Activated B cell treated with CpG ODN at 0.5 μM for 24 hours (primary cell): ENCODE measurements at regions of chr7 and their contacts with region 1.

Region 1: DNA sequence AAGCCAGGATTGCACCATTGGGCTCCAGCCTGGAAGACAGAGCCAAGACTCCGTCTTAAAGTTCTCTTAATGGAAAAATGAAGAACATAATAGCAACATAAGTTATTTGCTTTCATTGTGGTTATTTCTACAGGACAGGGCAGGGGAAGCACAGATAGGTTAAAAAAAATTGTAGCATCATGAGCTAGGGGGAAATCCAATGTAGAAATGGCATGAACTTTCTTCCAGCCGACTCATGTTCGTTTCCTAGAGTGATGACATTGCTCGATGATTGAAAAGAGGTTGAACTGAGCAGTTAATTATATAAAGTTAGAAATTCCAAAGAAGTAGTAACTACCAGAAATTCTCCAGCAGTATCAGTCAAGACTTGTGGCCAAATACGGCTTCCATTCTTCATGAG is 64.9 kb downstream of the DAGLB start:
- DNase-seq: no peak
- ATAC-seq: no peak
- H3K4me3 Mint-ChIP-seq: peak overlapping the region; percentile 16
- H3K27ac Mint-ChIP-seq: peak overlapping the region; percentile 53
- H3K4me1 Mint-ChIP-seq: peaks cover 76% of the 10 kb centered on the region
- H3K27me3 Mint-ChIP-seq: no peaks in the 10 kb centered on the region
- CTCF ChIP-seq: no peak

Region 2: DNA sequence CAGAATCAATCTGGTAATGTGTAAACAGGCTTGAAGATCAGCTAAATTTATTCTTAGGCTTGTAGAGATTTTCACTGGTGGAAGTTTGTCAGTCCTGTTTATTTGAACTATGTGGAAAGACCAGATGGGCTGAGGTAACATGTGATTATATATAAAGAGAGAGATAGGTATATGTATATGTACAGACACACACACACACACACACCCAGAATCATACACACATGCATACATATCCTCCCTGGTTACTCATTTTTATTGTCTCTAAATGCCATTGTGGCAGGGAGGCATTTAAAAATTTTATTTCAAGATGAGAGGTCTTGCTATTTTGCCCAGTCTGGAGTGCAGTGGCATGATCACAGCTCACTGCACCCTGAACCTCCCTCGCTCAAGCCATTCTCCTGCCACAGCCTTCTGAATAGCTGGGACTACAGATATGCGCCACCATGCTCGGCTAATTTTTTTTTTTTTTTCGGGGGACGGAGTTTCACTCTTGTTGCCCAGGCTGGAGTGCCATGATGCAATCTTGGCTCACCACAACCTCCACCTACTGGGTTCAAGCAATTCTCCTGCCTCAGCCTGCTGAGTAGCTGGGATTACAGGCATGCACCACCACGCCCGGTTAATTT is 32.3 kb before region 1 on chr7:
- CTCF ChIA-PET with region 1: interaction called, 3 read pairs
- POLR2A ChIA-PET with region 1: interaction called, 13 read pairs
- intact Hi-C with region 1: no loop called
- DNase-seq: no peak
- ATAC-seq: no peak
- H3K4me3 Mint-ChIP-seq: no peak overlapping the region
- H3K27ac Mint-ChIP-seq: peak overlapping the region; percentile 65
- H3K4me1 Mint-ChIP-seq: peaks cover 22% of the 10 kb centered on the region
- H3K27me3 Mint-ChIP-seq: no peaks in the 10 kb centered on the region
- CTCF ChIP-seq: no peak

Region 3: GRCh38 chr7:6447581-6448199 is 64.9 kb after region 1 on chr7 and contains the start of gene DAGLB:
- CTCF ChIA-PET with region 1: no interaction called
- POLR2A ChIA-PET with region 1: no interaction called
- intact Hi-C with region 1: no loop called
- DNase-seq: peak; percentile 95
- ATAC-seq: peak; percentile 88
- H3K4me3 Mint-ChIP-seq: peak within 1 kb of the TSS; percentile 95
- H3K27ac Mint-ChIP-seq: peak within 1 kb of the TSS; percentile 92
- H3K4me1 Mint-ChIP-seq: peaks cover 22% of the 10 kb centered on the region
- H3K27me3 Mint-ChIP-seq: no peaks in the 10 kb centered on the region
- CTCF ChIP-seq: no peak
- total RNA-seq, gene DAGLB: 13.3 and 18.3 TPM in 2 replicates